ENCODE measurements at regions of chr3 and their contacts with region 1.

Region 1: DNA sequence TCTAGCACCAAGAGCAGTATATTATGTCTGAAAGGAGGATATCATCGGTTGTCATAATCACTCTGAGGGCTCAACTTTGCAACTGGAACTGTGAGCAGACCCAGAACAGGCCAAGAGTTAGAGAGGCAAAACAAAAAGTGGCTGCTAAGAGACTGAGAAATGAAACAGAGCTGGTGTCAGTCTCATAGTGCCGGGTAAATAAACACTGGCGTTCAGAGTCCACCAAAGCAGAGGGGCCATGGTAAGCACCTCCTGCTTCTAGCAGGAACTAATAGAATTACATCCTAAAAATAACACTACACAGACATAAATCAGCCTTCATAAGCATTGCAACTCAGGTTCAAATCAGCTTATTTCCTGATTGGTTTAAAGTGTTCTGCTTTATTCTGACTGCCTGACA is 10.3 kb upstream of the IL12A start:
- DNase-seq: no peak
- ATAC-seq: peak; percentile 97

Region 2: DNA sequence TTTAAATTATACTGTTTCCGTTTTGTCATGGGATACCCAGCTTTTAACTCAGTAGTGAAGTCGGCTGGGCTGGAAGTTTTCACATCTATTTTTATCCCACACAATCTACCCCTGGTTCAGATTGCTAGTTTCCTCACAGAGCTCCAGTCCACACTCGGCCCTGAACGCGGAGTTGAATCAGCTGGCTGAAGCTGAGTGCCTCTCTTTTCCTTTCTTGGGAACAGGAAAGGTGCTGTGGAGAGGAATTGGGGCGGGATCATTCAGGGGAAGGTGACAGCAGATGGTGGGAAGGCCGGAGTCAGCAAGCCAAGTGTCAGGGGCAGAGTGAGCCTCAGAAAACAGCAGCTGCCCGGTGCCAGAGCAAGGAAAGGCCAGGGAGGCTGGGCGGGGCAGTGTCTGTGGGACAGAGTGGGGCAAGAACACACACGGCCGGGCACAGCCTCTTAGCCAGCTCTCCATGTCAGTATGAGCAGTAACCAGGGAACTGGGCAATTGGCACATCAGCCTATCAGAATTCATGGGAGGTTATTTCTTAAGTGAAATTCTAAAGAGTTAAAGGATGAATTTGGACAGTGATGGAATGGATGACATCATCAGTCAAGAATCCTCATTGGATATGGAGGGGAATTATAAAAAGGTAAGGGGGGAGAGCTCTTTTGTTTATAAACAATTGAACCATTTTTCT is 125.4 kb before region 1 on chr3:
- intact Hi-C with region 1: loop called (anchors 5 kb)
- DNase-seq: peak; percentile 84
- ATAC-seq: peak; percentile 86

Region 3: GRCh38 chr3:159929435-159930141 is 48.8 kb before region 1 on chr3:
- intact Hi-C with region 1: loop called (anchors 5 kb)
- DNase-seq: no peak
- ATAC-seq: peak; percentile 70

Measured in Right ventricle myocardium inferior (tissue), 1 donor.